ENCODE measurements at regions of chr12 and their contacts with region 1.

Region 1: GRCh38 chr12:101759396-101760047 is 20.3 kb upstream of the SYCP3 start:
- DNase-seq: no peak
- H3K4me3 ChIP-seq: no peak overlapping the region
- H3K27me3 ChIP-seq: no peaks in the 10 kb centered on the region
- CTCF ChIP-seq: peak; percentile 72

Region 2: DNA sequence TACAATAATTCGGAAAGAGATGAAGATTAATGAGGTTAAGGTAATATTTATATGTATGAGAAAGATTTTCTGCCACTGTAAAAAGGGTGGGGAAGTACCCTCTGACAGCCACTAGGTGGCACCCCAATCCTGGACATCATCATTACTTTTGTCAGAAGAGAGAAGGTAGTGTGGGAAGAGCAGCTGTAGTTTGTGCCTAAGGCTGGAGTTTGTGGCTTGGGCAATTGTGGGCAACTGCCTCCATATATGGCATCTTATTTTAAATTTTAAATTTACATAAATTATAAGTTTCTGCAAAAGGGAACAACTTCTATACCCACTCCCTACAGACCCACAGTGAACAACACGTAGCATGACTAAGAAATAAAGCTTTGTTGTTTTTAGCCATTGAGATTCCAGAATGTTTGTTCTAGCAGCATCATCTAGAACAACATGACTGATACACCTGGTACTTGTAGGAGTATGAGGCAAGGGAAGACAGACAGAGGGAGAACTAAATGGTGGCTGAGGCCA is 14.2 kb after region 1 on chr12:
- CTCF ChIA-PET with region 1: interaction called, 12 read pairs
- POLR2A ChIA-PET with region 1: no interaction called
- DNase-seq: peak; percentile 11
- H3K4me3 ChIP-seq: no peak overlapping the region
- H3K27me3 ChIP-seq: no peaks in the 10 kb centered on the region
- CTCF ChIP-seq: peak; percentile 80